ENCODE measurements at regions of chr7 and their contacts with region 1.

Region 1: GRCh38 chr7:22577396-22578001 is 77.5 kb upstream of the STEAP1B start:
- DNase-seq: peak; percentile 95
- H3K4me3 Mint-ChIP-seq: no peak overlapping the region
- H3K27ac Mint-ChIP-seq: peak overlapping the region; percentile 85
- H3K4me1 Mint-ChIP-seq: peaks cover 42% of the 10 kb centered on the region
- H3K27me3 Mint-ChIP-seq: no peaks in the 10 kb centered on the region
- CTCF ChIP-seq: no peak

Region 2: GRCh38 chr7:22542254-22542653 is 35.2 kb before region 1 on chr7:
- CTCF ChIA-PET with region 1: no interaction called
- POLR2A ChIA-PET with region 1: no interaction called
- intact Hi-C with region 1: no loop called
- DNase-seq: no peak
- H3K4me3 Mint-ChIP-seq: no peak overlapping the region
- H3K27ac Mint-ChIP-seq: no peak overlapping the region
- H3K4me1 Mint-ChIP-seq: no peaks in the 10 kb centered on the region
- H3K27me3 Mint-ChIP-seq: peaks cover 32% of the 10 kb centered on the region
- CTCF ChIP-seq: no peak

Region 3: GRCh38 chr7:22565315-22565811 is 12.1 kb before region 1 on chr7:
- CTCF ChIA-PET with region 1: interaction called, 17 read pairs
- POLR2A ChIA-PET with region 1: interaction called, 4 read pairs
- intact Hi-C with region 1: loop called (anchors 1 kb)
- DNase-seq: peak; percentile 70
- H3K4me3 Mint-ChIP-seq: no peak overlapping the region
- H3K27ac Mint-ChIP-seq: peak overlapping the region; percentile 40
- H3K4me1 Mint-ChIP-seq: peaks cover 40% of the 10 kb centered on the region
- H3K27me3 Mint-ChIP-seq: no peaks in the 10 kb centered on the region
- CTCF ChIP-seq: no peak

Region 4: DNA sequence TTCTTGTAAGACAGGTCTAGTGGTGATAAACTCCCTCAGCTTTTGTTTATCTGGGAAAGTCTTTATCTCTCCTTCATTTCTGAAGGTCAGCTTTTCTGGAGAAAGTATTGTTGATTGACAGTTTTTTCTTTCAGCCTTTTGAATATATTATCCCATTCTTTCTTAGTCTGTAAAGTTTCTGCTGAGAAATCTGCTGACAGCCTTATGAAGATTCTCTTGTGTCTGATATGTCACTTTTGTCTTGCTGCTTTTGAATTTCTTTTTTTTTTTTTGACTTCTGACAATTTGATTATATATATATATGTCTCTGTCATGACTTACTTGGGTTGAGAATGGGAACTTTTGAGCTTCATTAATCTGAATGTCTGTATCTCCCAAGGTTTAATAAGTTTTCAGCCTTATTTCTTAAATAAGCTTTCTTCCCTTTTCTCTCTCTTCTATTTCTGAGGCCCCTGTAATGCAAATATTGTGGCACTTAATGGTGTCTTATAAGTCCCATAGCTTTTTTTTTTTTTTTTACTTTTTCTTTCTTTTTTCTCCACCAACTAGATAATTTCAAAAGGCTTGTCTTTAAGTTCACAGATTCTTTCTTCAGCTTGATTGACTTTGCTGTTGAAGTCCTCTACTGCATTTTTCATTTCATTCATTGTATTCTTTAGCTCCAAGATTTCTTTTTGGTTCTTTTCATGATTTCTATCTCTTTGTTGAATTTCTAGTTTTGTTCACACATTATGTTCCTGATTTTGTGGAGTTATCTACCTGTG is 68.1 kb after region 1 on chr7:
- CTCF ChIA-PET with region 1: no interaction called
- POLR2A ChIA-PET with region 1: no interaction called
- intact Hi-C with region 1: no loop called
- DNase-seq: no peak
- H3K4me3 Mint-ChIP-seq: no peak overlapping the region
- H3K27ac Mint-ChIP-seq: no peak overlapping the region
- H3K4me1 Mint-ChIP-seq: no peaks in the 10 kb centered on the region
- H3K27me3 Mint-ChIP-seq: no peaks in the 10 kb centered on the region
- CTCF ChIP-seq: no peak

Measured in MCF 10A (cell line).